CD4-positive, alpha-beta memory T cell (primary cell): ENCODE measurements at regions of chr17 and their contacts with region 1.

Region 1: GRCh38 chr17:76671123-76671911 is 27.8 kb upstream of the ST6GALNAC1 start:
- DNase-seq: peak; percentile 98 to 99 (median 99)
- H3K4me3 ChIP-seq: peak overlapping the region; percentile 75 to 83
- H3K4me3 Mint-ChIP-seq: peak overlapping the region; percentile 87 to 97 (median 92)
- H3K27ac ChIP-seq: peak overlapping the region; percentile 72
- H3K27ac Mint-ChIP-seq: peak overlapping the region; percentile 91 to 98 (median 97)
- H3K4me1 ChIP-seq: peaks cover 34% of the 10 kb centered on the region
- H3K4me1 Mint-ChIP-seq: peaks cover 22 to 32% (median 29%) of the 10 kb centered on the region in 4 donors
- H3K27me3 ChIP-seq: no peaks in the 10 kb centered on the region
- H3K27me3 Mint-ChIP-seq: no peaks in the 10 kb centered on the region

Region 2: DNA sequence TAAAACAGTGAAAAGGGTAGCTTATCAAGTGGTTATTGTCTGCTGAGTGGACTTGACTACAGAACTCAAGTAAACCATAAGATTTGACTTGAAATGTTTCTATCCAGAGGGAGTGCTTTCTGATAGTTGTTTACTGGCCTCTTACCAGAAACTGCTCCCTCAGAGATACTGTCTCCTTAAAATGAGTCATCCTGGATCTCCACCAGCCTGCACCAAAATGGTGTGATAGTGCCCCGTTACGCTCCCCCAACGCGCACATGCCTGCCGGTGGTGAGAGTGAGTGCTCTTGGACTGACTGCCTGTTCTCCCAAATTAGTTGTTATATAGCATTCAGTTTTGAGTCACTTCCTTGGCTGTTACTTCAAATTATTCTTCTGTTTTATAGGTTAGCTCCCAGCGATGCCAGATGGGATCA is 108.6 kb before region 1 on chr17:
- CTCF ChIA-PET with region 1: interaction called, 17 read pairs
- POLR2A ChIA-PET with region 1: interaction called, 24 read pairs
- intact Hi-C with region 1: no loop called
- DNase-seq: no peak
- H3K4me3 ChIP-seq: no peak overlapping the region
- H3K4me3 Mint-ChIP-seq: peak overlapping the region; percentile 43 to 84 (median 56)
- H3K27ac ChIP-seq: peak overlapping the region; percentile 32
- H3K27ac Mint-ChIP-seq: peak overlapping the region; percentile 85 to 100 (median 87)
- H3K4me1 ChIP-seq: peaks cover 50% of the 10 kb centered on the region
- H3K4me1 Mint-ChIP-seq: peaks cover 44 to 86% (median 61%) of the 10 kb centered on the region in 4 donors
- H3K27me3 ChIP-seq: no peaks in the 10 kb centered on the region
- H3K27me3 Mint-ChIP-seq: no peaks in the 10 kb centered on the region

Region 3: DNA sequence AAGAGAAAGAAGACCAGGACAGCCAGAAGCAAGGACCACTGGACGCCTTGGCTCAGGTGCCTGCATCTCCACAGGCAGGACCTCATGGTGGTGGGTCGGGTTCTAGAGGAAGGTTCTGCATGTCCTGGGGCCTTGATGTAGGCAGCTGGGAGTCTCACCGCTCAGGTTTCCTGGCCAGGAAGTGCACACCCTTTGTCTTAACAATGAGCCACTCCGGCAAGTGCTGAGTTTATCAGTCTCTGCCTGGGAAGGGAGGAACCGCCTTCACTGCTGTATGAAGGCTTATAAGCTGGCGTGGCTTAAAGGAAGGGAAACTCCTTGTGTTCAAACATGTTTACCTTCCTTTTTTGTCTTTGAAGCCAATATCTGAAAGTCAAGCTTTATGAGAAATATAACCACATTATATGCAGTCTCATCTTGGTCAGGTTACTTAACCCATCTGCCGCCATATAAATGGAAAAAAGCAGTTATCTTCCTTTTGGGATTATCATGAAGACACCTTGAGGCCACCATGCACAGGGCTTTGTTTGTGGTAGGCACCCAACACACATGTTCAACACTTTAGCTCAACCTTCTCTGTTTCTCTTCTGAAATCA is 27.7 kb before region 1 on chr17 and contains the start of gene ST6GALNAC1:
- CTCF ChIA-PET with region 1: interaction called, 6 read pairs
- POLR2A ChIA-PET with region 1: interaction called, 40 read pairs
- intact Hi-C with region 1: no loop called
- DNase-seq: peak; percentile 28 to 66 (median 55)
- H3K4me3 ChIP-seq: peak within 1 kb of the TSS; percentile 36 to 59
- H3K4me3 Mint-ChIP-seq: peak within 1 kb of the TSS; percentile 81 to 96 (median 88)
- H3K27ac ChIP-seq: peak within 1 kb of the TSS; percentile 33
- H3K27ac Mint-ChIP-seq: peak within 1 kb of the TSS; percentile 67 to 91 (median 84)
- H3K4me1 ChIP-seq: peaks cover 36% of the 10 kb centered on the region
- H3K4me1 Mint-ChIP-seq: peaks cover 16 to 37% (median 34%) of the 10 kb centered on the region in 4 donors
- H3K27me3 ChIP-seq: no peaks in the 10 kb centered on the region
- H3K27me3 Mint-ChIP-seq: no peaks in the 10 kb centered on the region
- total RNA-seq, gene ST6GALNAC1: 12.7 to 14.6 TPM

Region 4: GRCh38 chr17:76659928-76660614 is 11.2 kb before region 1 on chr17:
- CTCF ChIA-PET with region 1: interaction called, 4 read pairs
- POLR2A ChIA-PET with region 1: interaction called, 86 read pairs
- intact Hi-C with region 1: no loop called
- DNase-seq: peak in 4 of 5 donors; percentile 39 to 54 (median 49)
- H3K4me3 ChIP-seq: peak overlapping the region in 1 of 2 donors; percentile 15
- H3K4me3 Mint-ChIP-seq: peak overlapping the region; percentile 63 to 88 (median 77)
- H3K27ac ChIP-seq: peak overlapping the region; percentile 35
- H3K27ac Mint-ChIP-seq: peak overlapping the region; percentile 83 to 96 (median 92)
- H3K4me1 ChIP-seq: peaks cover 46% of the 10 kb centered on the region
- H3K4me1 Mint-ChIP-seq: peaks cover 30 to 44% (median 37%) of the 10 kb centered on the region in 4 donors
- H3K27me3 ChIP-seq: no peaks in the 10 kb centered on the region
- H3K27me3 Mint-ChIP-seq: peaks cover 0 to 3% of the 10 kb centered on the region in 2 donors

Region 5: GRCh38 chr17:76696763-76697701 is 25.7 kb after region 1 on chr17:
- CTCF ChIA-PET with region 1: no interaction called
- POLR2A ChIA-PET with region 1: no interaction called
- intact Hi-C with region 1: no loop called
- DNase-seq: no peak
- H3K4me3 ChIP-seq: no peak overlapping the region
- H3K4me3 Mint-ChIP-seq: no peak overlapping the region
- H3K27ac ChIP-seq: no peak overlapping the region
- H3K27ac Mint-ChIP-seq: peak overlapping the region in 1 of 7 donors; percentile 76
- H3K4me1 ChIP-seq: peaks cover 5% of the 10 kb centered on the region
- H3K4me1 Mint-ChIP-seq: peaks cover 0 to 38% (median 5%) of the 10 kb centered on the region in 4 donors
- H3K27me3 ChIP-seq: no peaks in the 10 kb centered on the region
- H3K27me3 Mint-ChIP-seq: no peaks in the 10 kb centered on the region